Aorta (tissue), 5 donors: ENCODE measurements at regions of chrX and their contacts with region 1.

Region 1: DNA sequence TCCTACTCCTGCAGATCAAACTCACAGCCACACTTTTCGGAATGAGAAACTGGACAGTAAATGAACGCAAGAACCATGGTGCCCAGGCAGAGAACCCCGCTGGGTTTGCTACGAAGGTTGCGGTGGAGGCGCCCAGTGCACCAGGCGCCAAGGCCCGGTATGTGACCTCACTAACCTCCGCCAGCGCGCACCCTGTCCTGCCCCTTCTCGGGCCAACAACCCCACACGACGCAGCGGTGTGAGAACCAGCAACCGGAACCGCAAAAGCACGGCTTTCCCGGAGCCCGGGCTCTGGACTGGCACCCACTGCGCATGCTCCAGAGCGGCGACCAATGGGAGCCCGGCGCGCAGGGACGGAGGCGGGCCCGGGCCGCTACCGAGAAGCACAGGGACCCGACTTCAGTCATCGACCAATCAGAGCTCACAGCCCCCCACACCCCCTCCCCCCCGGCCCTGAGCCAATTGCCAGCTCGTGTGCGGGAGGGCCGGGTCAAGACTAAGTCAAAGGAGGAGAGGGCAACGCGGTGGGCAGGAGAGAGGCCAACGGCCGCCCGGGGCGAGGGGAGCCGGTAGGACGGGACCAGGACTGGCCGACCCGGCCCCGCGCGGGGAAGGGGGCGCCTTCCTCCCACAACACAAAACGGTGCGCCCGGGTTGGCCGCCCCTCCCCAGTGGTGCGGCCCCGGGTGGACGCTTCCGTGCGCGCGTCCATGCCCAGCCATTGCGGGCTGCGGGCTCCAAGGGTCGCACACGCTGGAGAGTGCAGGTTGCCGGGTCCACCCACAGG is 7.3 kb upstream of the WAS start:
- DNase-seq: peak; percentile 93 to 94
- ATAC-seq: peak; percentile 95
- H3K4me3 ChIP-seq: peak overlapping the region; percentile 49 to 80
- H3K27ac ChIP-seq: peak overlapping the region in 1 of 2 donors; percentile 75
- H3K4me1 ChIP-seq: no peaks in the 10 kb centered on the region
- H3K27me3 ChIP-seq: no peaks in the 10 kb centered on the region

Region 2: DNA sequence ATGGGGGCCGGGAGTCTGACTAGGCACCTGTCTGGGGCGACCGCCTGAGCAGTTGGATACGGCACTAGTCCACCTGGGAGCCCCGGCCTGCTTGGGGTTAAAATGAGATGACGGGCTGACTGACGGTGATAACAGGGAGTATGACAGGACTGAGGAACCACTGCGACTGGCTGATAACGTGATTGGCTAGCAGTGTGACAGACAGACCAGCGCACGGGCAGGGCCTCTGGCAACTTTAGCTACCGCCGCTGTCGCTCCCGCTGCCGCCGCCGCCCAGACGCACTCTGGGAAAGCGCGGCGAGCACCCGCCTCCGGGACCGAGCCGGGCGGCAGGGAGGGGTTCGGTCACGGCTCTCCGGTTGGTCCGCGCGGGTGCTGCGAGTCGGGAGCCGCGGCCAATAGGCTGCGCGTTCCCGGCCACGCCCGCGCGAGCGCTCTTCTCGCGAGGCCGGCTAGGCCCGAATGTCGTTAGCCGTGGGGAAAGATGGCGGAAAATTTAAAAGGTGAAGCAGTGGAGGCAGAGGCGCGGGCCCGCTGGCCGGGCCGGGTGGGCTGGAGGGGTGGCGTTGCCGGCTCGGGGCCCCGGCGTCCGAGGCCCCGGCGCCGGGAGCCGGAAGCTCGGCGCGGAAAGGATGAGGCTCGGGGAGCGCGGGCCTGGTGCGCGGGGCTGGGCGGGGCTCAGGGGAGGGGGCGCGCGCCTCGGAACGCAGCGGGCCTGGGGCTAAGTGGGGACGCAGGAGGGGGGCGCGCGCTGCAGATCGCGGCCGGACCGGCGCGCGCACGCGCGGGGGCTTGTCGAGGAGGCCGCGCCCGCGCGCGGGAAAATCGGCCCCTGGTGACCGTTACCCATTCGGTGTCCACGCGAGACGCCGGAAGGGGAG is 20.2 kb after region 1 on chrX and contains the start of gene SUV39H1:
- intact Hi-C with region 1: loop called in 1 of 2 experiments (anchors 1 kb)
- DNase-seq: peak; percentile 91 to 95
- ATAC-seq: peak; percentile 95
- H3K4me3 ChIP-seq: peak within 1 kb of the TSS; percentile 70 to 82
- H3K27ac ChIP-seq: peak within 1 kb of the TSS in 1 of 2 donors; percentile 99
- H3K4me1 ChIP-seq: no peaks in the 10 kb centered on the region
- H3K27me3 ChIP-seq: no peaks in the 10 kb centered on the region
- total RNA-seq, gene SUV39H1: 2.6 to 3.0 TPM